Psoas muscle (tissue), 8 donors: ENCODE measurements at regions of chr1 and their contacts with region 1.

Region 1: DNA sequence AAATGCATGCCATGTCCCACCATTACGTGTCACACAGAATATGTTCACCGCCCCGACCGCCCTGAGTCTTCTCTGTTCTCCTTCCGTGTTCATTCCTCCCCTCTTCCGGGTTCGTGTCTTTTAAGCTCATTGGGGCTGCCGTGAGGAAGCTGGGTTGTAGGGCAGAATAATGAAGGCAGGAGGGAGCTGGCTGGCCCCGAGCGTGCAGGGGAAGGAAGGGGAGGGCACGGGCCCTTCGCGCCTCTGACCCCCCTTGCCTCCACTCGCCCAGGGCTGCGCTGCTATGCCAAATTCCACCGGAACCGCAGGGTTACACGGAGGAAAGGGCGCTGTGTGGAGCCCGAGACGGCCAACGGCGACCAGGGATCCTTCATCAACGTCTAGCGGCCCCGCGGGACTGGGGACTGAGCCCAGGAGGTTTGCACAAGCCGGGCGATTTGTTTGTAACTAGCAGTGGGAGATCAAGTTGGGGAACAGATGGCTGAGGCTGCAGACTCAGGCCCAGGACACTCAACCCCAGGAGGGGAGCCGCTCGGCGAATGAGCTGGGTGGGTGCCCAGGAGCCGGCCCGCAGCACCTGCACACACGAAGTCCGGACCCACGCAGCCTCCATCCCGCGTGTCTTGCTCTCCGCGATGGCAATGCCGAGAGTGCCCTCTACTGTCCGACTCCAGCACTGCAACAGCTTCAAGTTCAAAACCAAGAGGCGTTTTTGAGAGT is 16.5 kb upstream of the AGTRAP start:
- DNase-seq: peak; percentile 83 to 89
- ATAC-seq: peak; percentile 78 to 92 (median 84)
- H3K4me3 ChIP-seq: peak overlapping the region; percentile 37
- H3K27ac ChIP-seq: no peak overlapping the region
- H3K4me1 ChIP-seq: peaks cover 7% of the 10 kb centered on the region
- H3K27me3 ChIP-seq: peaks cover 0 to 4% (median 0%) of the 10 kb centered on the region in 3 donors
- CTCF ChIP-seq: peak; percentile 93

Region 2: GRCh38 chr1:11653101-11653860 is 66.2 kb before region 1 on chr1:
- intact Hi-C with region 1: loop called (anchors 2 to 5 kb)
- DNase-seq: peak in 1 of 2 donors; percentile 53
- ATAC-seq: peak in 2 of 4 donors; percentile 19 to 31
- H3K4me3 ChIP-seq: no peak overlapping the region
- H3K27ac ChIP-seq: no peak overlapping the region
- H3K4me1 ChIP-seq: peaks cover 11% of the 10 kb centered on the region
- H3K27me3 ChIP-seq: peaks cover 0 to 7% (median 6%) of the 10 kb centered on the region in 3 donors
- CTCF ChIP-seq: no peak

Region 3: DNA sequence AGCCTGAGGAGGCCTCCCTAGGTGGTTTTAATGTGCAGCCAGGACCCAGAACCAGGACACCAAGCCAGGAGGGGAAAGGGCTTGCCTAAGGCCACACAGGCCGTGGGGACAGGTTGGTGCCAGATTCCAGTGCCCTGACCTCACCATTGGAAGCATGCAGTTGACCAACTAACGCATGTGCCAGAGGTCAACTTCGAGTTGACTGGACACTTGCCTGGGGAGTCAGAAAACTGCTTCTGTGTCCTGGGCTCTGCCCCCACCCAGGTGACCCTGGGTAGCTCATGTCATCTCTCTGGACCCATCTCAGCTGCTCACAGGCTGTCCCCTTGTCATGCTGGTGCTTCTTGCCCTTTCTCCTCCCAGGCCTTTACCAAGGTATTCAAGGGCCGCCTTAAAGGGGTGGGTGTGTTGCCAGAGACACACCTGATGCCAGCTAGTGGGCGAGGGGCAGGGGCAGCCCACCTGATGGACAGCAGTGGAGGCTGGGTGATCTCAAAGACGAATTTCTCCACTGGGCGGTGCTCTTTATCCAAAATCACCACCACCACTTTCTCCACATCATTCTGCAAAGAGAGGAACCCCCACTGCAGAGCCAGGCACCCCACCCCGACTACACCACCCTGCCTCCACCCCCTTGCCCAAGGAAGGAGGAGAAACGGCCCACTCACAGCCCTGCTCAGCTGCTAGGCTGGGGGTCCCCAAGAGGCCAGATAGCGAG is 42.9 kb before region 1 on chr1:
- intact Hi-C with region 1: loop called in 1 of 2 experiments (anchors 5 kb)
- DNase-seq: no peak
- ATAC-seq: no peak
- H3K4me3 ChIP-seq: no peak overlapping the region
- H3K27ac ChIP-seq: no peak overlapping the region
- H3K4me1 ChIP-seq: peaks cover 7% of the 10 kb centered on the region
- H3K27me3 ChIP-seq: no peaks in the 10 kb centered on the region
- CTCF ChIP-seq: no peak